Dendritic cell treated with granulocyte-macrophage colony-stimulating factor and Interleukin-4, amounts not matched to agents 40 ng/mL and 50 ng/mL, for 4 days (primary cell): ENCODE measurements at regions of chr6 and their contacts with region 1.

Region 1: GRCh38 chr6:134253681-134254080 is 64.2 kb downstream of the SGK1 start:
- H3K4me3 Mint-ChIP-seq: no peak overlapping the region
- H3K27ac Mint-ChIP-seq: no peak overlapping the region
- H3K4me1 Mint-ChIP-seq: peaks cover 11% of the 10 kb centered on the region
- H3K27me3 Mint-ChIP-seq: peaks cover 1% of the 10 kb centered on the region

Region 2: DNA sequence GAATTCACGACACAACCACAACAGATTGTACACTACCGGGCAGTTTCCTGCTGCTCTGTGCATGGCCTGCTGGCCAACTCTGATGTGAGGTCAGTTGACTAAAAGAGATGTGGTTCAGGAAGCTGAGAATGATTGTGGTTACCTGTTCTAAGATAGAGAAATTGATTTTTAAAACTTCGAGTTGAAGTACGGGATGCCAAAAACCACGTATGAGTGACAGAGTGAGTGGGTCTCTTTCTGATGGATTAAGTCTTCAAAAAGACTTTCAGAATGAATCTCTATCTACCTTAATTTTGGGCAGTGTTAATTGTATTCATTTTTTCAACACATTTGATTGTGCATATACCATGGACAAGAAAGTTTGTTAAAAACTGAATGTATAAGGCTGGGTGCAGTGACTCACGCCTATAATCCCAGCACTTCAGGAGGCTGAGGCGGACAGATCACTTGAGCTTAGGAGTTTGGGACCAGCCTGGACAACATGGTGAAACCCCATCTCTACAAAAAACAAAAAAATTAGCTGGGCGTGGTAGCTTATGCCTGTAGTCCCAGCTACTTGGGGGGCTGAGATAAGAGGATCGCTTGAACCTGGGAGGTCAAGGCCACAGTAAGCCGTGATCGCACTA is 57.0 kb before region 1 on chr6:
- intact Hi-C with region 1: no loop called
- H3K4me3 Mint-ChIP-seq: no peak overlapping the region
- H3K27ac Mint-ChIP-seq: no peak overlapping the region
- H3K4me1 Mint-ChIP-seq: peaks cover 3% of the 10 kb centered on the region
- H3K27me3 Mint-ChIP-seq: no peaks in the 10 kb centered on the region

Region 3: GRCh38 chr6:134317471-134318131 is 63.9 kb after region 1 on chr6 and contains the start of gene SGK1:
- intact Hi-C with region 1: loop called (anchors 10 kb)
- H3K4me3 Mint-ChIP-seq: peak within 1 kb of the TSS; percentile 83
- H3K27ac Mint-ChIP-seq: peak within 1 kb of the TSS; percentile 55
- H3K4me1 Mint-ChIP-seq: peaks cover 13% of the 10 kb centered on the region
- H3K27me3 Mint-ChIP-seq: peaks cover 39% of the 10 kb centered on the region